PC-3 (cell line): ENCODE measurements at regions of chr1 and their contacts with region 1.

Region 1: GRCh38 chr1:64980745-64981600 is 14.6 kb upstream of the JAK1 start:
- DNase-seq: peak; percentile 80
- ATAC-seq: peak; percentile 74
- H3K4me3 ChIP-seq: no peak overlapping the region; the same call in 1 of the 2 replicates
- H3K27ac ChIP-seq: peak overlapping the region; percentile 96
- H3K4me1 ChIP-seq: peaks cover 25% of the 10 kb centered on the region
- H3K27me3 ChIP-seq: no peaks in the 10 kb centered on the region
- CTCF ChIP-seq: no peak

Region 2: GRCh38 chr1:64598100-64598571 is 382.8 kb before region 1 on chr1:
- CTCF ChIA-PET with region 1: no interaction called
- POLR2A ChIA-PET with region 1: interaction called, 31 read pairs
- intact Hi-C with region 1: no loop called
- DNase-seq: peak; percentile 42
- ATAC-seq: no peak
- H3K4me3 ChIP-seq: no peak overlapping the region
- H3K27ac ChIP-seq: no peak overlapping the region
- H3K4me1 ChIP-seq: no peaks in the 10 kb centered on the region
- H3K27me3 ChIP-seq: no peaks in the 10 kb centered on the region
- CTCF ChIP-seq: no peak

Region 3: GRCh38 chr1:64948905-64949833 is 31.8 kb before region 1 on chr1:
- CTCF ChIA-PET with region 1: no interaction called
- POLR2A ChIA-PET with region 1: no interaction called
- intact Hi-C with region 1: loop called (anchors 1 kb)
- DNase-seq: peak; percentile 59
- ATAC-seq: peak; percentile 71; the same call in 1 of the 2 replicates
- H3K4me3 ChIP-seq: no peak overlapping the region
- H3K27ac ChIP-seq: no peak overlapping the region
- H3K4me1 ChIP-seq: peaks cover 8% of the 10 kb centered on the region
- H3K27me3 ChIP-seq: no peaks in the 10 kb centered on the region
- CTCF ChIP-seq: no peak